Breast epithelium (tissue), 4 donors: ENCODE measurements at regions of chr4 and their contacts with region 1.

Region 1: GRCh38 chr4:121668368-121669162 is 28.2 kb downstream of the ANXA5 start:
- DNase-seq: no peak
- H3K4me3 ChIP-seq: no peak overlapping the region
- H3K27ac ChIP-seq: peak overlapping the region in 1 of 2 donors; percentile 41
- H3K4me1 ChIP-seq: no peaks in the 10 kb centered on the region
- H3K27me3 ChIP-seq: no peaks in the 10 kb centered on the region
- CTCF ChIP-seq: no peak
- POLR2A ChIP-seq: no peak

Region 2: GRCh38 chr4:120418146-120418545 is 1250.4 kb before region 1 on chr4:
- intact Hi-C with region 1: loop called (anchors 10 kb)
- DNase-seq: no peak
- H3K4me3 ChIP-seq: no peak overlapping the region
- H3K27ac ChIP-seq: no peak overlapping the region
- H3K4me1 ChIP-seq: no peaks in the 10 kb centered on the region
- H3K27me3 ChIP-seq: no peaks in the 10 kb centered on the region
- CTCF ChIP-seq: no peak
- POLR2A ChIP-seq: no peak